ENCODE measurements at regions of chrX and their contacts with region 1.

Region 1: DNA sequence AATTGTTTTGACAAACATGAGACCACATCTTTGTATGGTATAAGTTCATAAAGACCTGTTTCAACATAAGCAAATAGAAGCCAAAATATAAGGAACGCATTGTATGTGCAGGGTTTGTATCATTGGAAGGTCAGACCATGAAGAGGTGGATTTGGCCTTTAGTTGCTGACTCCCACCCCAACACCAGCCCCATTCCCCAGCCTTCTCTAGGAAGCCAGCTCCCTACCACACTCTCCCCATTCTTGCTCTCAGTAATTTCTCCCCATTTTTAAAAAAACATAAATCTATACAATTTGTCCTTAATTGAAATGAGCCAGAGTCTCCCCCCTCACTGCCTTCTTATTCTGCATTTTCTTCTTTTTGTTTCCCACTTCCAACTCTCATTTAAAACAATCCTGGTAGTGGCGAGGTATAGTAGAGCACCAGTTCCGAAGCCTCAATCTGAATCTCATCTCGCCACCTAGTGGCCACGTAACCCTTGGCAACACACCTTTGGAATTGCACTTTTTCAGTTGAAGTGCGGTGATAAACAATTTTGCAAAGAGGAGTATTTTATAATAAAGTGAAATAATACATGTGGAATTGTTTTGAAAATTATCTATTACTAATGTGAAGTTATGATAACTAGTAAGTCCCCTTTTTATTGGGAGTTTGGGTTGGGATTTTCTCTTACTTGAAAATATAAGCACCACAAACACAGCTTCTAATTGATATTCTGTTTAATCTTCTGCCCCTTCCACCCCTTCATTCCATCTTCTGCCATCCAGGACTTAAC is 126.6 kb downstream of the ASB9 start:
- DNase-seq: peak; percentile 18
- H3K4me3 ChIP-seq: no peak overlapping the region
- H3K27ac ChIP-seq: no peak overlapping the region
- H3K4me1 ChIP-seq: no peaks in the 10 kb centered on the region
- H3K27me3 ChIP-seq: peaks cover 0 to 5% of the 10 kb centered on the region in 2 experiments
- CTCF ChIP-seq: peak; percentile 38 to 54
- POLR2A ChIP-seq: no peak

Region 2: GRCh38 chrX:14039344-14039743 is 1103.9 kb before region 1 on chrX:
- CTCF ChIA-PET with region 1: interaction called, 15 read pairs
- POLR2A ChIA-PET with region 1: no interaction called
- dilution Hi-C with region 1: no loop called
- intact Hi-C with region 1: loop called (anchors 1 kb)
- DNase-seq: peak; percentile 46
- H3K4me3 ChIP-seq: no peak overlapping the region
- H3K27ac ChIP-seq: no peak overlapping the region
- H3K4me1 ChIP-seq: no peaks in the 10 kb centered on the region
- H3K27me3 ChIP-seq: no peaks in the 10 kb centered on the region
- CTCF ChIP-seq: peak; percentile 23 to 31
- POLR2A ChIP-seq: no peak

Region 3: DNA sequence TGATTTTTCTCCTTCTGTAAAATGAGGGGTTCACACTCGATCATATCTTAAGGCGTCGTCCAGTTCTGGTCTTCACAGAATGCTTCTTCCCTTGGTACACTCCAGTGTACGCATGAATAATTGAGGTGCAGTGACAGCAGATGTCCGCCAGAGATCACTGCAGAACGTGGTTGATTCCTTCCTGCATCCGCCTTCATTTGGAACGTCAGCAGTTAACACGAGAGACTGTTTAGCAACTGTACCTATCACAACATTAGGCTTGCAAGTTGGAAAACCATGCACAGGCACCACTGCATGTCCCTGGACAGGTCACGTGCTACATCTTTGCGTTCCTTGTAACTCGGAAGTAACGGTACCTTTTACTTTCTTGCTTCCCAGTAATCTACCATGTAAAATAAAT is 1047.5 kb before region 1 on chrX:
- CTCF ChIA-PET with region 1: interaction called, 35 read pairs
- POLR2A ChIA-PET with region 1: no interaction called
- dilution Hi-C with region 1: no loop called
- intact Hi-C with region 1: loop called (anchors 1 kb)
- DNase-seq: peak; percentile 47
- H3K4me3 ChIP-seq: no peak overlapping the region
- H3K27ac ChIP-seq: no peak overlapping the region
- H3K4me1 ChIP-seq: no peaks in the 10 kb centered on the region
- H3K27me3 ChIP-seq: no peaks in the 10 kb centered on the region
- CTCF ChIP-seq: peak; percentile 47 to 59
- POLR2A ChIP-seq: no peak

Region 4: DNA sequence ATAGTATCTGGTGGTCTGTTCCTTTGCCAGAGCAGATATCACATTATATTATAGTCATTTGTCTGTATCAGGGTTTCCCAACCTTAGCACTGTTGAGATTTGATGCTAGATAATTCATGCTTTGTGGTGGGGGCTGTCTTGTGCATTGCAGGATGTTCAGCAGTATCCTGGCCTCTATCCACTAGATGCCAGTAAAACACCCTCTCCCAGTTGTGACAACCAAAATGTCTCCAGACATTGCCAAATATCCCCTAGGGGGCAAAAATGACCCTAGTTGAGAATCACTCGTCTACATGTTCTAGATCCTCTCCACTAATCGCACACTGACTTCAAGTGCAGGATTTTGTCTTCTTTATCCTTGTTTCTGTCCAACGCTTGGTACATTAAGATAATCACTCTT is 431.1 kb before region 1 on chrX:
- CTCF ChIA-PET with region 1: no interaction called
- POLR2A ChIA-PET with region 1: no interaction called
- dilution Hi-C with region 1: no loop called
- intact Hi-C with region 1: loop called (anchors 5 kb)
- DNase-seq: no peak
- H3K4me3 ChIP-seq: no peak overlapping the region
- H3K27ac ChIP-seq: no peak overlapping the region
- H3K4me1 ChIP-seq: no peaks in the 10 kb centered on the region
- H3K27me3 ChIP-seq: no peaks in the 10 kb centered on the region
- CTCF ChIP-seq: no peak
- POLR2A ChIP-seq: no peak

Region 5: DNA sequence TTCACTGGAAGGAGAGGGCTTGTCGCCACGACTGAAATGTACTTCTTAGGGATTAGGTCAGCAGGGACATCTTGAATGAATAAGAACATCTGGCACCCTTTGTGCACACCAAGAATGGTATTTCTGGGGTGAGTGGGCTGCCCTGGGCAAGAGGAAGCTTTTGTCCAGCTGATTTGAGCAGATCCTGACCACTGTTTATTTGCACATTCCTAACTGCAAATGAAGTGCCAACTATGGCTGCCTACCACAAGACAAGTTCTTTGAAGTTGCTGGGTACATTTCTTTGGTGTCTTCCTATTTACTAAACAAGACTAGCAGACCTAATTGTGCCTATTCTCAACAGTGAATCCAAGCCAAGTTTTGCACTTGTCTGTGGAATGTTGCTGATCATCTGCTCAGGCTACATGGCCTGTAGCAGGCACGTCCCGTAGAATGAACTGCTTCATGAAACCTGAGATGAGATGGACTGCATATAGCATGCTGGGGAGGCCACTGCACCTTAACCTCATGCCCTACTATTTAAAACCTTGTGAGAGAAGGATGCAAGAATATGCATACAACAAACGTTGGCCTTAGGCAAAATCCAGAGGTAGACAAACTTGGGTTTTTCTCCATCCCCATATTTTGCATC is 304.9 kb after region 1 on chrX:
- CTCF ChIA-PET with region 1: no interaction called
- POLR2A ChIA-PET with region 1: no interaction called
- dilution Hi-C with region 1: no loop called
- intact Hi-C with region 1: no loop called
- DNase-seq: no peak
- H3K4me3 ChIP-seq: no peak overlapping the region
- H3K27ac ChIP-seq: no peak overlapping the region
- H3K4me1 ChIP-seq: peaks cover 3% of the 10 kb centered on the region
- H3K27me3 ChIP-seq: no peaks in the 10 kb centered on the region
- CTCF ChIP-seq: no peak
- POLR2A ChIP-seq: no peak

Region 6: GRCh38 chrX:16160729-16161128 is 1017.5 kb after region 1 on chrX:
- CTCF ChIA-PET with region 1: no interaction called
- POLR2A ChIA-PET with region 1: no interaction called
- dilution Hi-C with region 1: no loop called
- intact Hi-C with region 1: no loop called
- DNase-seq: peak; percentile 1
- H3K4me3 ChIP-seq: no peak overlapping the region
- H3K27ac ChIP-seq: no peak overlapping the region
- H3K4me1 ChIP-seq: no peaks in the 10 kb centered on the region
- H3K27me3 ChIP-seq: no peaks in the 10 kb centered on the region
- CTCF ChIP-seq: no peak
- POLR2A ChIP-seq: no peak